ENCODE measurements at regions of chr2 and their contacts with region 1.

Region 1: DNA sequence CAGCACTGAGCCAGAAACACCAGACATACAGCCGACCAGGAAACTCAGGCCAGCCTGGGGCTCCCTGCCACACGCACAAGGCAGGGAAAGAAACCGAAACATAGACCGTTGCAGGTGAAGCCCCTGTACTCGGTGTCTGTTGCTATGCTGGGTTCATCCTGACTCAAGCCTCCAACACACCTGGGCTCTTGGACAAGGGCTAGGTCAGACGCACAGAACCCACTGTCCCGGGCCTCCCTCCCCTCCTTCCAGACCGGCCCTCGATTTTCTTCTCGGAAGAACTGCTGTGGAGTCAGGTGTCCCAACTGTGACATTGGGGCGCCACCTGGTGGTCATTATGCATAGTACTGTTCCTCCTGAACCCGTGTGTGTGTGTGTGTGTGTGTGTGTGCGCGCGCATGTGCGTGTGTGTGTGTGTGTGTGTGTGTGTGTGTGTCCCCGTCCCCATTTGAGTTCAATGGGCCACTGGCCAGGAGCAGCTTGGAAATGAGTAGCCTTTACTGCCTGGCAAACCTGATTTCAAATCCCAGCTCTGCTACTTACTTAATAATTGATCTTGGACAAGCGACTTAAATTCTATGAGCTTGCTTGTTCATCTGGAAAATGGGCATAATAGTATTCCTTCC is 55.4 kb upstream of the GLI2 start:
- DNase-seq: peak; percentile 87 to 91
- ATAC-seq: peak; percentile 84
- H3K4me3 ChIP-seq: no peak overlapping the region
- H3K27ac ChIP-seq: no peak overlapping the region
- H3K4me1 ChIP-seq: no peaks in the 10 kb centered on the region
- H3K27me3 ChIP-seq: no peaks in the 10 kb centered on the region

Region 2: DNA sequence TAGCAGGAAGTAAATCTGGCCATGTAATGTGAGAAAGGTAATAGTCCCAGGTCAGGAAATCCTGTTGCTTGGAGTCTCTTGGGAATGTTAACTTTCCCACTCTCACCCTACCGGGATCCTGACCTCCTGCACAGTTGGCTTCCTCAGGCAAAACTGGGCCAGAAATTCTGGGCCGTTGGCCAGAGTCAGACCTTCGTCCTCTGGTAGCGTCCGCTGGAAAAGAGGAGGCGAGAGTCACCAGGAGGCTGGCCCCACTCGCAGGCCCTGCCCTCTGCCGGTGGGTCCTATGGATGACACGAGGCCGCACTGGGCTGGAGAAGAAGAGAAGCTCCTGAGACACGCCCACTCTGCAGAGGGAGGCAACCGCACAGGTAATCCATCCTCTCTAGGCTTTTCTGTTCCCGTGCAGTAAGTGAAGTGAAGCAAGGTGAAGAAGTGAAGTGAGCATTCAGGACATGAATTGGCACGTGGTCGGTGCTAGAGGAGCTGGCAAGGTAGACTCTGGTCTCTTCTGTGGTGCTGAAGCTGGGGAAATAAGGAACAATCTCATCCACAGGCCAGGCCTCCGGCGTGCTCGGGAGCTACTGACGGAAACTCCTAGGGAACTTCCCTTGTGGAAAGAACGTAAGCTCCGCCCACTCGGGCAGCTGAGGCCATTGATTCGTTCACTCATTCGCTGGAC is 127.3 kb before region 1 on chr2:
- intact Hi-C with region 1: loop called in 1 of 2 experiments (anchors 10 kb)
- DNase-seq: peak; percentile 89 to 93
- ATAC-seq: peak; percentile 87
- H3K4me3 ChIP-seq: no peak overlapping the region
- H3K27ac ChIP-seq: no peak overlapping the region
- H3K4me1 ChIP-seq: peaks cover 0 to 3% of the 10 kb centered on the region in 2 donors
- H3K27me3 ChIP-seq: no peaks in the 10 kb centered on the region

Region 3: GRCh38 chr2:120576509-120577474 is 103.5 kb before region 1 on chr2:
- intact Hi-C with region 1: loop called in 1 of 2 experiments (anchors 10 kb)
- DNase-seq: no peak
- ATAC-seq: peak; percentile 58
- H3K4me3 ChIP-seq: peak overlapping the region in 1 of 2 donors; percentile 5
- H3K27ac ChIP-seq: no peak overlapping the region
- H3K4me1 ChIP-seq: no peaks in the 10 kb centered on the region
- H3K27me3 ChIP-seq: no peaks in the 10 kb centered on the region